MCF 10A (cell line): ENCODE measurements at regions of chr11 and their contacts with region 1.

Region 1: GRCh38 chr11:75532200-75533048 is 6.7 kb upstream of the GDPD5 start:
- DNase-seq: peak; percentile 80
- H3K4me3 Mint-ChIP-seq: no peak overlapping the region
- H3K27ac Mint-ChIP-seq: no peak overlapping the region
- H3K4me1 Mint-ChIP-seq: peaks cover 5% of the 10 kb centered on the region
- H3K27me3 Mint-ChIP-seq: no peaks in the 10 kb centered on the region
- CTCF ChIP-seq: peak; percentile 87

Region 2: GRCh38 chr11:75406338-75406777 is 126.1 kb before region 1 on chr11:
- CTCF ChIA-PET with region 1: interaction called, 16 read pairs
- POLR2A ChIA-PET with region 1: interaction called, 3 read pairs
- intact Hi-C with region 1: no loop called
- DNase-seq: no peak
- H3K4me3 Mint-ChIP-seq: no peak overlapping the region
- H3K27ac Mint-ChIP-seq: no peak overlapping the region
- H3K4me1 Mint-ChIP-seq: peaks cover 36% of the 10 kb centered on the region
- H3K27me3 Mint-ChIP-seq: no peaks in the 10 kb centered on the region
- CTCF ChIP-seq: no peak

Region 3: DNA sequence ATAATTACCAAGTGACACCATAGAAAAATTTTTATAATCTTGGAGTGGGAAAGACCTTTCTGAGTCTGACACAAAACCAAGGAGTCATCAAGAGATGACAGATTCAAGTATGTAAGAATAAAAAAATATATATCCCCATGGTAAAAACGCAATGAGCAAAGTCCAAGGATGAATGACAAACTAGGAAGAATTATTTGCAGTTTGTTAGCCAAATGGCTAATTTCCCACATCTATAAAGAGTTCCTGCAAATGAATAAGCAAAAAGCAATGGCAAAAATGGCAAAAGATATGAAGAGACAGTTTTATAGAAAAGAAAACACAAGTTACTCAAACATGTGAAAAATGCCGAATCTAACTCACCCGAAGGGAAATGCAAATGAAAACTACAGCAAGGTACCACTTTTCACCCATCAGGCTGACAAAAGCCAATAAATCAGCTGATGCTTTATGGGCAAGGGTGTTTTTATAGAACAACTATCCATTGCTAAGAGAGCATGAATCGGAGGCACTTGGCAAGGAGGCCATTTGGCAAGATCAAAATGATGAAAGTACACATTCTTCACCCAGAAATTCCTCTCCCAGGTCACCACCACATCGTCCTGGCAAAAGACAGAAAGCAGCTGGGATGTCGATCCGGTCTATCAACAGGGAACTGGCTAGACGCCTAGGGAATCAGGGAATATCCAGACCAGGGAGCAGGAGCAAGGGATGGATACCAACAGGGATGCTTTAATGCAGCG is 78.3 kb before region 1 on chr11:
- CTCF ChIA-PET with region 1: interaction called, 17 read pairs
- POLR2A ChIA-PET with region 1: no interaction called
- intact Hi-C with region 1: no loop called
- DNase-seq: no peak
- H3K4me3 Mint-ChIP-seq: no peak overlapping the region
- H3K27ac Mint-ChIP-seq: peak overlapping the region; percentile 12
- H3K4me1 Mint-ChIP-seq: no peaks in the 10 kb centered on the region
- H3K27me3 Mint-ChIP-seq: no peaks in the 10 kb centered on the region
- CTCF ChIP-seq: no peak

Region 4: DNA sequence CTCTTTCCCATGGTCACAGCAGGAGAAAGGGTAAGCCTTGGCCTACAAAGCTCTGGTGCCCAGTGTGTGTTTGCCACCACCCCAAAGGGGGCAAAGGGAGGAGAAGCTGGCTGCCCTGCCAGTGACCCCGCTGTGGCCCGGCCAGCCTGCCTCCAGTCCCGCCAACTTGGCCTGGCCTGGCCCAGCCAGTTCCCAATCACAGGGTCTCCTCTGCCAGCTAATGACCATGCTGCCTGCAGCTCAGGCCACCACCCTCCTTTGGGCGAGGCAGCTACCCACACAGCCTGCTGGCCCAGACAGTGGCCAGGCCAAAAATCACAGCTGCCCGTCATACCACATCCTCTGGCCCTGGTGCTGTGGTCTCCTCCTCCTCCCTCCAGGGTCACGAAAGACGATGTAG is 11.7 kb before region 1 on chr11:
- CTCF ChIA-PET with region 1: interaction called, 12 read pairs
- POLR2A ChIA-PET with region 1: no interaction called
- intact Hi-C with region 1: no loop called
- DNase-seq: no peak
- H3K4me3 Mint-ChIP-seq: no peak overlapping the region
- H3K27ac Mint-ChIP-seq: no peak overlapping the region
- H3K4me1 Mint-ChIP-seq: no peaks in the 10 kb centered on the region
- H3K27me3 Mint-ChIP-seq: no peaks in the 10 kb centered on the region
- CTCF ChIP-seq: no peak